Calu3 (cell line): ENCODE measurements at regions of chr1 and their contacts with region 1.

Region 1: DNA sequence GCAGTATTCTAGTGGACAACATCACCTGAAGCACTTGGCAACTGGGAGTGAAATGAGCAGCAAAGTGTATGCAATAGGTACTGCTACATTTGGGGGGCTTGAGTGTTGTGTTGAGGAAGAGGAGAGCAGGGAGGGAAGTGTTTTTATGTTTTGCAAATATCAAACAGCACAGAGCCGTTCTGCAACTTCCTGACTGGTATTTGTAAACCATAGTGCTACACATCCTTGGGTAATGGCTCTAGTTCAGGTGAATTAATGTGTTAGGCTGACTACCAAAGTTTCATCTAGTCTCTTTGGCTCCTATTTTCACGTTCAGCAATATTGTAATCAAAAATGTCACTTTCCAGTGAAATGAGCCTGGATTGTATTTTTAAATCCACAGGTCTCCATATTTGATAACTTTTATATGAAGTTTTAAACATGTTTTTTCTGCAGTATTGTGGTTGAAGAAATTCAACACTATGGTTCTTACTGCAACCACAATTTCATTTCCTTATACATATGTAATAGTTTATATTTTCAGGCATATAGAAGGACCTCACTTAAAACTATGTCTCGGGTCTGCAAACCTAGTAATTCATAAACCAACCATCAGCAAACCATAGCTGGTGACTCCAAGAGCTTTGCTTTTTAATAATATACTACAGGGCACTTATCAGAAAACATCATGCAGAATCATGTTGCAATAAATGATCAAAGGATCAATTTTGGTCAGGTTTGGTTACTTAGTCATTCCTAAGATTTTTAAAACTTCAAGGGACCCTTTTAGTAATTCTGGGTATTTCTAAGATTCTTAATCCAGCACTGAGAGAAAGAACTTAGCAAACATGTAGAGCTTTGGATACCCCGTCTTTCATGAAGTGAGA is 18.8 kb downstream of the ZBTB37 start:
- DNase-seq: no peak
- H3K4me3 Mint-ChIP-seq: no peak overlapping the region
- H3K27ac Mint-ChIP-seq: no peak overlapping the region
- H3K4me1 Mint-ChIP-seq: no peaks in the 10 kb centered on the region
- H3K27me3 Mint-ChIP-seq: no peaks in the 10 kb centered on the region
- CTCF ChIP-seq: no peak

Region 2: DNA sequence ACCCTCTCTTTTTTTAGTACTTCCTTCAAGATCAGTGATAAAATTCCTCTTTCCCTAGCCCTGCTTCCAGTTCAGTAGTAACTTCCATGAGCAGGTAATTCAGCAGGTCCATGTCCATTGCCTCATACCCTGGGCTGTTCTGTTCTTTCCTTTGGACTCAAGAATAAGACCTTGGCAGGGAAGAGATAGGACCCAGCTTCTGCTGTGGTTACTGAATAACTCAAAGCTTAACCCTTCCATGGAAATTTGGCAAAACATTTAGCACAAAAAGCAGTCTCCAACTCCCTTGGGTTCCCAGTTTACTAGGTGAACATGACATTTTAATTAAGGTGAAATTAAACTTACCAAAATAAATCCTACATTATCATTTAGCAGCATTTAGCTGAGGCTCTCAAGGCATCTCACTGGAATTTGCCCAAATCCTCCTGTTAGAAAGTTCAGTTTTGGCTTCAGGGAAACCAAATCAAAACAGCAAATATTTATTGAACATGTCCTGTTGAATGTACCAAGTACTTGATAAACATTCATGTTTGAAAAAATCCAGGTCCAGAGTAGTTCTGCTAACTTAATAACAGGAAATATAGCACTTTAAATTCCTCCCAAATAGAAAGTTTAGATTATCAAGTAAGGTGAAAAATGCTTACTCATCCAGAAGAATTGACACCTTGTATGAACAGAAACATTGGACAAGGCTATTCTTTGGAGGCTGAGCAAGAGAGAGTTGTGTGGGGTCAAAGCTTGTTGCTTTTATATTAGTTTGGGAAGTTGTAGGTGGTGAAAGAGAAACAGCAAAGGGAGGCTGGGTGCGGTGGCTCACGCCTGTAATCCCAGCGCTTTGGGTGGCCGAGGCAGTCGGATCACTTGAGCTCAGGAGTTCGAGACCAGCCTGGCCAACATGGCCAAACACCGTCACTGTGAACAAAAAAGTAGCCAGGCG is 38.6 kb after region 1 on chr1:
- CTCF ChIA-PET with region 1: no interaction called
- intact Hi-C with region 1: loop called (anchors 1 kb)
- DNase-seq: no peak
- H3K4me3 Mint-ChIP-seq: no peak overlapping the region
- H3K27ac Mint-ChIP-seq: no peak overlapping the region
- H3K4me1 Mint-ChIP-seq: no peaks in the 10 kb centered on the region
- H3K27me3 Mint-ChIP-seq: peaks cover 10% of the 10 kb centered on the region
- CTCF ChIP-seq: no peak

Region 3: DNA sequence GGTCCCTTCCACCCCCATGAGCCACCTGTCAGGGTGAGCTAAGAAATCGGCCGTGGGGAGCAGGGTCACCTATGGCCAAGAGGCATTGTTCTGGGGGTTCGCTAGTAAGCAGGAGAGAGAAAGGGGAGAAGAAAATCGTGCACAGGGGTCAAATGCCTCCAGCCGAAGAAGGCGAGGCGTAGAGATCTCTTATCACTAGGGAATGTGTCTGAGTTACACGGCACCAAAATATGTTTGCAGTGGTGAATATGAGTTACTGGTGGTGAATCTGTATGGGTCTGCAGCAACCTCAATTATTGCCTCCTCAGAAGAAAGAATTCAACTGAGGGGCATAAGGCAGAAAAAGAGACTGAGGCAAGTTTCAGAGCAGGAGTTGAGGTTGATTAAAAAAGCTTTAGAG is 218.1 kb after region 1 on chr1:
- CTCF ChIA-PET with region 1: no interaction called
- intact Hi-C with region 1: no loop called
- DNase-seq: no peak
- H3K4me3 Mint-ChIP-seq: no peak overlapping the region
- H3K27ac Mint-ChIP-seq: no peak overlapping the region
- H3K4me1 Mint-ChIP-seq: no peaks in the 10 kb centered on the region
- H3K27me3 Mint-ChIP-seq: no peaks in the 10 kb centered on the region
- CTCF ChIP-seq: no peak